Heart left ventricle (tissue), 16 donors: ENCODE measurements at regions of chr19 and their contacts with region 1.

Region 1: GRCh38 chr19:46860125-46860845 is 512 bp upstream of the ARHGAP35 start:
- DNase-seq: peak; percentile 98 to 99 (median 99)
- ATAC-seq: peak; percentile 87 to 92 (median 90)
- H3K4me3 ChIP-seq: peak overlapping the region; percentile 63 to 97 (median 87)
- H3K27ac ChIP-seq: peak overlapping the region; percentile 96 to 100 (median 98)
- H3K4me1 ChIP-seq: peaks cover 8 to 67% (median 47%) of the 10 kb centered on the region in 12 donors
- H3K27me3 ChIP-seq: no peaks in the 10 kb centered on the region
- CTCF ChIP-seq: peak in 3 of 12 donors; percentile 10 to 18 (median 15)
- POLR2A ChIP-seq: peak in 1 of 2 donors; percentile 70

Region 2: GRCh38 chr19:46890423-46891170 is 30.3 kb after region 1 on chr19:
- intact Hi-C with region 1: no loop called
- DNase-seq: no peak
- ATAC-seq: peak in 2 of 4 donors; percentile 42 to 45
- H3K4me3 ChIP-seq: no peak overlapping the region
- H3K27ac ChIP-seq: no peak overlapping the region
- H3K4me1 ChIP-seq: peaks cover 0 to 39% (median 21%) of the 10 kb centered on the region in 12 donors
- H3K27me3 ChIP-seq: no peaks in the 10 kb centered on the region
- CTCF ChIP-seq: no peak
- POLR2A ChIP-seq: no peak

Region 3: DNA sequence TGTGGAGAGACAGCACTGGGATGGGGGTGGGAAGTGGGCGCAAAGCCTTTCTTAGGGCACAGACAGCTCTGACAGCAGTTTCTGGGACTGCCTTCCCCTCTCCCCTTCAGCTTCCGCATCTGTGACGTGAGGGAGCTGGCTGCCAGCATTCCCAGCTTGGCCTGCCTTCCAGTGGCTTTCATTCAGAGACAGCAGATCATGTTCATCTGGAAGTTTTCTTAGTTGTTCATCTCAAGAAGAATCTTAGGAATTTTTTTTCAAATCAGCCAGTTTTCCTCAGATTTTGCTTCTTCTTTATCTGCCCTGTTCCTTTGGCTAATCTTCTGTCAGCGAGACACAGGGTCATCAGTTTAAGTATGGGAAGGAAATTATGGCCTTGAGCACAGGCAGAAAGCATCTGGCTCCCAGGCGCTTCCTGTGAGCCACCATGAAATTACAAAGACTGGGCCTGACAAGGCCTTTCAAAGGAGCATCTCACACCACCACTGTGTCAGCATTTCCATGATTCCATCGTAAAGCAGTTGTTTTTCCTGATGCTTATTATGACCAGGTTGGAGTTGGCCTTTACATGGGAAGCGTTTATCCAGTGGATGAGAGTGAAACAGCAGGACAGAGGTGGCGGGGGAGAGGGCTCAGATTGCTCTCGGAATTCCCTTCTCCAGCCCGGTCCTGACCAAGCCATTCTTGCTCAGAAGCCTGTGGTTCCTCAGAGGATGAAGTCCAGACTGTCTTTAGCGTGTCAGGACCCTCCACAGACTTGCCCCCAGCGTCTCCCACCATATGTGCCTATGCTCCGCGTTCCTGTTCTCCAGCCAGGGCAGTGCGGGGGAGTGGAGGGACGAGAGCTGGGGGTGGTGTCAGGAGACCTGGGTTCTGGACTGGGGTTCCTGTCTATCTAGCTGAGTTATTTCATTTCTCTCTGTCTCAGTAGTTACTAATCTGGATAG is 44.1 kb after region 1 on chr19:
- intact Hi-C with region 1: loop called in 4 of 10 experiments (anchors 5 kb)
- DNase-seq: peak in 4 of 5 donors; percentile 45 to 75 (median 59)
- ATAC-seq: peak in 3 of 4 donors; percentile 65 to 71 (median 66)
- H3K4me3 ChIP-seq: no peak overlapping the region
- H3K27ac ChIP-seq: peak overlapping the region in 11 of 12 donors; percentile 31 to 66 (median 48)
- H3K4me1 ChIP-seq: peaks cover 9 to 81% (median 53%) of the 10 kb centered on the region in 12 donors
- H3K27me3 ChIP-seq: no peaks in the 10 kb centered on the region
- CTCF ChIP-seq: no peak
- POLR2A ChIP-seq: no peak

Region 4: DNA sequence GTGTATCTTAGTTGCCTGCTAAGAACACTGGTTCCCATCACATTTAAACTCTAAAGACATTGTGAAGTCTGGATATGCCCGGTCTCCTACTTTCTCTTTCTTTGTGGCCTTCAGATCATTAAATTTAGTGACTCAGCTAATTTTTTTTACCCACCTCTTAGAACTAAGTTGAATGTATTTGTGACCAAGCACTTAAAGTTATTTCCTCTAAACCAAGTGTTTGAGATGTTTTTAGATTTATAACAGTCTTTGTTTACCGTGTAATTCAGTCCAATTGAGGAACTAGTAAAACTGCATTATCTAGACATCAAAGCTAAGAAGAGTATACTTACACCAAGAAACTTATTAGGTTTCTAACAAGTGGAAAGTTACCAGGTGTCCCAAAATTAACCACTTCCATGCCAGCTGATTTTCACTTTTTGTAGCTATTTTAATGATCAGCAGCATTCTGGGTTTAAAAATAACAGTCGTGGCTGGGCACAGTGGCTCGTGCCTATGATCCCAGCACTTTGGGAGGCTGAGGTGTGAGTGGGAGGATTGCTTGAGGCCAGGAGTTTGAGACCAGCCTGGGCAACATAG is 53.7 kb after region 1 on chr19:
- intact Hi-C with region 1: loop called in 1 of 10 experiments (anchors 10 kb)
- DNase-seq: no peak
- ATAC-seq: no peak
- H3K4me3 ChIP-seq: peak overlapping the region in 1 of 12 donors; percentile 8
- H3K27ac ChIP-seq: peak overlapping the region in 10 of 12 donors; percentile 22 to 78 (median 44)
- H3K4me1 ChIP-seq: peaks cover 0 to 69% (median 22%) of the 10 kb centered on the region in 12 donors
- H3K27me3 ChIP-seq: no peaks in the 10 kb centered on the region
- CTCF ChIP-seq: no peak
- POLR2A ChIP-seq: no peak

Region 5: GRCh38 chr19:46924874-46925547 is 64.7 kb after region 1 on chr19:
- intact Hi-C with region 1: loop called in 2 of 10 experiments (anchors 5 to 10 kb)
- DNase-seq: peak in 3 of 5 donors; percentile 24 to 43 (median 42)
- ATAC-seq: peak in 3 of 4 donors; percentile 49 to 85 (median 73)
- H3K4me3 ChIP-seq: no peak overlapping the region
- H3K27ac ChIP-seq: peak overlapping the region in 11 of 12 donors; percentile 11 to 72 (median 56)
- H3K4me1 ChIP-seq: peaks cover 16 to 66% (median 53%) of the 10 kb centered on the region in 12 donors
- H3K27me3 ChIP-seq: no peaks in the 10 kb centered on the region
- CTCF ChIP-seq: no peak
- POLR2A ChIP-seq: no peak

Region 6: DNA sequence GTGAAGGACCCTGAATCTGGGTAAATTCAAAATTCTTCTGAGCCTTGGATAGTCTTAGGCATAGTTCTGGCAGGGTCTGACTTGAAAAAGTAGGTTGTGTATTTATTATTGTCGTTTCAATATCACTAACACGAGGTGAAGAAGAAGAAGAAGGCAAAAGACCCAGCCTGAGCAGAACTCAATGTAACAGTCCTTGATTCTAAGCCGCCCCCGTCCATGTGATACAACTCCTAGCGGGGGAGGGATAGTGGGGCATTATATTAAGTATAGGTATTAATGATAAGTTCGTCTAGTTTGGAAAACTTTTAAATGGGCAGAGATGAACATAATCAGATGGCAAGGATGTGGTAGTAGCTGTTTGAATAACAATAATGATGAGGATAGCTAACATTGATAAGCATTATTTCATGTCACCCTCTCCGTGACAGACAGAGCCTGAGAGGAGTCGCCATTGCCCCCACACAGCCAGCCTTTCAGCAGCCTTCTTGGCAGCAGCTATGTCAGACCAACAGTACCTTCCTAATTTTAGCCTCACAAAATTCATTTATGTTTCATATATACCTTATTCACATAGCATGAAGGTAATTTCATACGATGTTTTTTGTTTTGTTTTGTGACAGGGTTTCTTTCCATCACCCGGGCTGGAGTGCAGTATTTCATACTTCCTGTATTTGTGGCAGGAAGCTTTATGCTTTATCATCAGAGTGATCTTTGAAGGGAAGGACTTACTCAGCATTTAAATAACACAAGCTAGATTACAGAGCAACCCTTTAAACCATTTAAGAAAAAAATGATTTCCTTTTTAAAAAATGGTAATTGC is 94.9 kb after region 1 on chr19:
- intact Hi-C with region 1: no loop called
- DNase-seq: no peak
- ATAC-seq: peak in 1 of 4 donors; percentile 48
- H3K4me3 ChIP-seq: peak overlapping the region in 1 of 12 donors; percentile 47
- H3K27ac ChIP-seq: peak overlapping the region in 6 of 12 donors; percentile 8 to 87 (median 36)
- H3K4me1 ChIP-seq: peaks cover 5 to 74% (median 38%) of the 10 kb centered on the region in 12 donors
- H3K27me3 ChIP-seq: no peaks in the 10 kb centered on the region
- CTCF ChIP-seq: no peak
- POLR2A ChIP-seq: no peak

Region 7: DNA sequence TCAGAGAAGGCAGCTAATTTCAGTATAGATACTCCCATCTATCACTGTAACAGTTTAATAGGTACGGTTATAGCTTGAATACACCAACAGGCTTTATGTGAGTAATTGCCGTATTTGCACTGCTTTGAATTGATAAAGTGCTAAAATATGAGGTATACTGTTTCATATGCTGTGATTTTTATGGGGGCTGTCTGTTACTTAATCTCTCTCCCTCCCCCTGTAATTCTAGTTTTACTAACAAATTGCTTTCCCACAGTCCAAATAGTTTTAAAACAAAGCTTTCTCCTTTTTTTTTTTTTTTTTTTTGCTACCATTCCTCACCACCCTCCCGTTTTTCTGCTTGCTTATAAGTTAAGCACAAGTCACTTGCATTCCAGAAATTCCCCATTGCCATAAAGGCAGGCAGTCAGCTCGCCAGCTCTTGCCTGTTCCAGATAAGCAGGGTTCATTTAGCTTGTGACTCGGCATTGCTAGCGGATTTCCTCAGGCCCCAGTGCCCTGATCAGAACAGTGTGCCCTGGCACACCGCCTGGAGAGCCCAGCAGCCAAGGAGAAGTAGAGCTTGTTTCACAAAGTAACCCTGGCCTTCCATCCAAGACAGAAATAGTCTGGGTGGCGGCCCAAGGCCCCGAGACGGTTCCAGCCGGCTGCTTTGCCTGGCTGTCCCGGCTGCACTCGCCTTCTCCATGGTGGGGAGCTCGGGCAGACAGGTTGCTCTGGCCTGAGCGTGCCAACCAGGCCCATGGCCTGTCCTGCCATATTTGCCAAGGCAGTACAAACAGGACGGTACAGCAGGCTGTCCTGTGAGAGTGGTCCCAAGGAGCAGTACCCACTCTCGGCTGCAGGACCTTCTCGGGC is 115.9 kb after region 1 on chr19:
- intact Hi-C with region 1: loop called in 3 of 10 experiments (anchors 1 to 5 kb)
- DNase-seq: peak; percentile 91 to 97 (median 95)
- ATAC-seq: peak; percentile 88 to 93 (median 91)
- H3K4me3 ChIP-seq: peak overlapping the region in 2 of 12 donors; percentile 0 to 19
- H3K27ac ChIP-seq: peak overlapping the region; percentile 80 to 95 (median 90)
- H3K4me1 ChIP-seq: peaks cover 22 to 92% (median 71%) of the 10 kb centered on the region in 12 donors
- H3K27me3 ChIP-seq: no peaks in the 10 kb centered on the region
- CTCF ChIP-seq: no peak
- POLR2A ChIP-seq: peak in 1 of 2 donors; percentile 14

Region 8: DNA sequence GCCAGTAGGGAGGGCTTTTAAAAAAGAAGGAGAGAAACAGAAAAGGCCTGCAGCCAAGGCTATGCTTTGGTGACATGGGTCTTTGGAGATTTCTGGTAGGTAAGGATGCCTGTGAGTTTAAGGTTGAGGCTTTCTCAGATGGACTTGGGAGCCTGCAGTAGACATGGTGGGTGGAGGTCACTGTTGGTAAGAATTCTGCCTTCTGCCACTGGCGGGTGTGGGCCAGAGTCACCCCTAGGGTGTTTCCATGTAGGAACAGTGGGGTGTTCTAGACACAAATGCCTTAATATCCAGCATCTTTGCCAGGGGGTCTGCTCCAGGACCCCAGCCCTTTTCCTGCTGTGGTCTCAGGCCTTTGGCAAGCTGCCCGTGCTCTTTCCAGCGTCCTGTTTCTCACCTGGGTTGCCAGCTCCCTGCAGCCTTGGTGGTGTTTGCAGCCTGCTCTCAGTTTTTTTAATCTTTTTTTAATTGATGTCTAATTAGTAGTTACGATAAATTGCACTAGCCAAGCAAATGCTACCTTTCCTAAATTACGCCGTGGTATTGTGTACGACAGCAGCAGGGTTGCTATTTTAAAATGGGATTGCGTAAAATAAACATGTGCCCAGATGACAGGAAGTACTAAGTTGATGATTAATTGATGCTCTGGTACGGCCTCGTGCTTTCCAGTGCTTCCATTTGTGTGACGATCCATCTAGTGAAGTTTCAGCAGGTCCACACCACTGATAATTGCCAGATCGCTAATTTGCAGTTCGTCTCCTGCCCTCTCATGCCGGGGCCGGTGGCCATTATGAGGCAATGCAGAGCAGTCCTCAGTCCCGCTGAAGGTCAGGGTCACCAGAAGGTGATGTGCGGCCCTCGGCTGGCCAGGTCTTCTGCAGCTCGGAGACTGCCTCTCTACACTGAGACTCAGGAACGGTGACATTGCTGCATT is 124.1 kb after region 1 on chr19:
- intact Hi-C with region 1: loop called in 3 of 10 experiments (anchors 2 to 5 kb)
- DNase-seq: peak in 2 of 5 donors; percentile 73 to 83
- ATAC-seq: peak; percentile 60 to 86 (median 76)
- H3K4me3 ChIP-seq: no peak overlapping the region
- H3K27ac ChIP-seq: peak overlapping the region; percentile 48 to 85 (median 82)
- H3K4me1 ChIP-seq: peaks cover 0 to 86% (median 57%) of the 10 kb centered on the region in 12 donors
- H3K27me3 ChIP-seq: no peaks in the 10 kb centered on the region
- CTCF ChIP-seq: no peak
- POLR2A ChIP-seq: no peak

Region 9: GRCh38 chr19:47112997-47113849 is 252.9 kb after region 1 on chr19 and contains the start of gene ZC3H4:
- intact Hi-C with region 1: loop called in 6 of 10 experiments (anchors 5 to 10 kb)
- DNase-seq: peak; percentile 99 to 100 (median 99)
- ATAC-seq: peak; percentile 94 to 97 (median 95)
- H3K4me3 ChIP-seq: peak within 1 kb of the TSS; percentile 71 to 99 (median 94)
- H3K27ac ChIP-seq: peak within 1 kb of the TSS; percentile 97 to 100 (median 100)
- H3K4me1 ChIP-seq: peaks cover 0 to 36% (median 17%) of the 10 kb centered on the region in 12 donors
- H3K27me3 ChIP-seq: no peaks in the 10 kb centered on the region
- CTCF ChIP-seq: no peak
- POLR2A ChIP-seq: peak; percentile 54 to 73
- total RNA-seq, gene ZC3H4: 16.5 to 35.0 (median 24.7) TPM